Activated naive CD4-positive, alpha-beta T cell treated with anti-CD3 and anti-CD28 coated beads for 36 hours (primary cell): ENCODE measurements at regions of chr22 and their contacts with region 1.

Region 1: GRCh38 chr22:37316875-37317371 is 34.6 kb downstream of the CYTH4 start:
- DNase-seq: peak; percentile 85
- H3K4me3 Mint-ChIP-seq: no peak overlapping the region
- H3K27ac Mint-ChIP-seq: no peak overlapping the region
- H3K4me1 Mint-ChIP-seq: peaks cover 21% of the 10 kb centered on the region
- H3K27me3 Mint-ChIP-seq: no peaks in the 10 kb centered on the region

Region 2: GRCh38 chr22:37254209-37254866 is 62.6 kb before region 1 on chr22:
- CTCF ChIA-PET with region 1: no interaction called
- intact Hi-C with region 1: no loop called
- DNase-seq: no peak
- H3K4me3 Mint-ChIP-seq: no peak overlapping the region
- H3K27ac Mint-ChIP-seq: no peak overlapping the region
- H3K4me1 Mint-ChIP-seq: peaks cover 36% of the 10 kb centered on the region
- H3K27me3 Mint-ChIP-seq: no peaks in the 10 kb centered on the region

Region 3: GRCh38 chr22:37267135-37267587 is 49.8 kb before region 1 on chr22:
- CTCF ChIA-PET with region 1: interaction called, 46 read pairs
- intact Hi-C with region 1: loop called (anchors 1 kb)
- DNase-seq: peak; percentile 77
- H3K4me3 Mint-ChIP-seq: peak overlapping the region; percentile 78
- H3K27ac Mint-ChIP-seq: peak overlapping the region; percentile 74
- H3K4me1 Mint-ChIP-seq: peaks cover 27% of the 10 kb centered on the region
- H3K27me3 Mint-ChIP-seq: no peaks in the 10 kb centered on the region

Region 4: GRCh38 chr22:37282385-37282677 is 34.6 kb before region 1 on chr22 and contains the start of gene CYTH4:
- CTCF ChIA-PET with region 1: interaction called, 17 read pairs
- intact Hi-C with region 1: no loop called
- DNase-seq: peak; percentile 88
- H3K4me3 Mint-ChIP-seq: peak within 1 kb of the TSS; percentile 85
- H3K27ac Mint-ChIP-seq: peak within 1 kb of the TSS; percentile 97
- H3K4me1 Mint-ChIP-seq: peaks cover 53% of the 10 kb centered on the region
- H3K27me3 Mint-ChIP-seq: no peaks in the 10 kb centered on the region
- total RNA-seq, gene CYTH4: 30.5 to 34.0 TPM

Region 5: GRCh38 chr22:37428649-37429586 is 112.0 kb after region 1 on chr22:
- CTCF ChIA-PET with region 1: interaction called, 63 read pairs
- intact Hi-C with region 1: loop called (anchors 1 kb)
- DNase-seq: peak; percentile 69
- H3K4me3 Mint-ChIP-seq: no peak overlapping the region
- H3K27ac Mint-ChIP-seq: no peak overlapping the region
- H3K4me1 Mint-ChIP-seq: peaks cover 16% of the 10 kb centered on the region
- H3K27me3 Mint-ChIP-seq: peaks cover 42% of the 10 kb centered on the region

Region 6: GRCh38 chr22:37457093-37457893 is 140.4 kb after region 1 on chr22:
- CTCF ChIA-PET with region 1: interaction called, 22 read pairs
- intact Hi-C with region 1: loop called (anchors 1 kb)
- DNase-seq: peak; percentile 93
- H3K4me3 Mint-ChIP-seq: no peak overlapping the region
- H3K27ac Mint-ChIP-seq: no peak overlapping the region
- H3K4me1 Mint-ChIP-seq: no peaks in the 10 kb centered on the region
- H3K27me3 Mint-ChIP-seq: no peaks in the 10 kb centered on the region

Region 7: DNA sequence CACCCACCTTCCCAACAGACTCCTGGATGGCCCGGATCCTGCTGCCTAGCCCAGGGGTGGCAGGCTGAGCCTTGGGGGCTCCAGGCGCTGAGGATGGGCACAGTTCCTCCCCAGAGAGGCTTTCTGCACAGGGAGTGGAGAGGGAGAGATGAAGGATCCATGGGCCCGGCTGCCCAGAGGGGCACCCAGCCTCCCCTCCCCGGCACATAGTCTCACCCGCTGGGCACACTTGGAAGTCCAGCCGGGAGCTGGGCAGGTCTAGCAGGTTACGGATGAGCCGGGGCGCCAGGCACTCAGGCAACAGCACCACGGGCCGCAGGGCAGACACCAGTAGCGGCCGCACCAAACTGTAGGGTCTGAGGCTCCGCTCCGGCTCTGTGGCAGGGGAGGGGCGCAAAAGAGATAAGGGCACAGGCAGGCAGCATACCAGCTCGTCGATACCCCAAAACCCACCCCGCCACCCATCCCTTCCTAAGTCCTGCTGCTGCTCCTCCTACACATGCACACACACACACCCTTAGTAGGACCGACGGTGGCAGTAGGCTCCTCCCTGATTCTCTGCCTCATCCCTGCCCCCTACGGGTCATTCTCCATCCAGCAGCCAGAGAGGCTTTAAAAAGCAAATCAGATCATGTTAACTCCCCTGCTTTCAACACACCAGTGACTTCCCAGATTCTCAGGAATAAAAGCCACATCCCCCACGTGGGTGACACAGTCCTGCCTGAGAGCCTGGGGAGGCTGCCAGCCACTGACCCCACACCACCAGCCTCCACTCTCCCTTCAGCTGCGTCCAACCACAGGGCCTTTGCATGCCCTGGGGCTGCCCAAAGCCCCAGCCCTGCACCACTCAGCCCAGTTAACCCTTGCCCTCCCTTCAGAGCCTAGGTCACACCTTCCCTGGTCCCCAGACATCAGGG is 175.8 kb after region 1 on chr22:
- CTCF ChIA-PET with region 1: interaction called, 3 read pairs
- intact Hi-C with region 1: loop called (anchors 2 kb)
- DNase-seq: peak; percentile 75
- H3K4me3 Mint-ChIP-seq: no peak overlapping the region
- H3K27ac Mint-ChIP-seq: no peak overlapping the region
- H3K4me1 Mint-ChIP-seq: peaks cover 43% of the 10 kb centered on the region
- H3K27me3 Mint-ChIP-seq: no peaks in the 10 kb centered on the region